Mammary epithelial cell (primary cell): ENCODE measurements at regions of chr13 and their contacts with region 1.

Region 1: DNA sequence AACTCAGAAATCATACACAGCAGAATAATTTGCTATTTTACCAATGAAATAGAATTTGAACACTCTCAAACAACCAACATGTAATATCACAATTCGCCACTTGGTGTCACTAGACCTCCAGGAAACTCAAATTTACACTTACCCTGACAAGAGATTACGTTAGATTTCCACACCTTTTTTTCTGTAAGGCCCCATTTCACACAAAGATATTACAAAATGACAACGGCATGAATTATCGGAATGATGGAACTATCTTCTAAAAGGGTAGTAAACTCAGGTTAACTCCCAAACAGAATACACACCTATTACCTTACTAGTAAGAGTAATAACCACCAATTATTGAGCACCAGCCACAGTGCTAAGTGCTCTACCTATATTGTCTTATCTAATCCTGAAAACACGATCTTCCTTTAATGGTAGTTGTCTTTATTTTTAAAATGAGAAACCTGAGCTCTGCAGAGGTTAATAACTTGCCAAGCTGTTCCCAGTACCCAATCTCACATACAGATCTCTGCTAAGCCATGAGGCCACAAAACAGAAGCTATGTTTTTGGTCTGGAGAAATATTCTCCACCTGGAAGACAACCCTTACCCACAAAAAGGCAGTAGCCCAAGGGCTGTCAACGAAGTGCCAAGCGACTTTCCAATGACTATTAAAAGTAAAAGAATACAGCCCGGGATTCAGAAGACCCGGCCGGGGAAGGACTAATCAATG is 152.4 kb downstream of the DCLK1 start:
- DNase-seq: peak; percentile 49
- H3K4me3 ChIP-seq: no peak overlapping the region
- H3K27ac ChIP-seq: peak overlapping the region; percentile 14
- H3K4me1 ChIP-seq: peaks cover 13% of the 10 kb centered on the region
- H3K27me3 ChIP-seq: no peaks in the 10 kb centered on the region
- CTCF ChIP-seq: peak; percentile 60 to 71

Region 2: GRCh38 chr13:35729926-35730627 is 248.7 kb before region 1 on chr13:
- CTCF ChIA-PET with region 1: no interaction called
- dilution Hi-C with region 1: no loop called
- in situ Hi-C with region 1: no loop called
- intact Hi-C with region 1: no loop called
- DNase-seq: no peak
- H3K4me3 ChIP-seq: no peak overlapping the region
- H3K27ac ChIP-seq: no peak overlapping the region
- H3K4me1 ChIP-seq: no peaks in the 10 kb centered on the region
- H3K27me3 ChIP-seq: no peaks in the 10 kb centered on the region
- CTCF ChIP-seq: no peak

Region 3: DNA sequence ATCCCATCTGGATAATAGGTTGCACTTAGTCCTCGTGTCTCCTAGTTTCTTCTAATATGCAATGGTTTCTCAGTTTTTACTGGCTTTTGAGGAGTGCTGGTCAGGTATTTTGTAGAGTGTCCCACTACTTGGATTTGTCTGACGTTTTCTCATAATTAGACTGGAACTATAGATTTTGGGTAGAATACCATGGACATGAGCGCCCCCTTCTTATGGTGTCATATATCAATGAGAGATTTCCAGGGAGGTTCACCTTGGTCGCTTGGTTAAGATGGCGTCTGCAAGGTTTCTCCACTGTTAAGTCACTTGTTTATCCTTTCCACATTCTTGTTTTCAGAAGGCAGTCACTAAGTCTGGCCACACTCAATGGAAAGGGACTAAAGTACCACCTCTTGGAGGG is 228.9 kb after region 1 on chr13:
- CTCF ChIA-PET with region 1: no interaction called
- dilution Hi-C with region 1: no loop called
- in situ Hi-C with region 1: no loop called
- intact Hi-C with region 1: loop called (anchors 1 kb)
- DNase-seq: no peak
- H3K4me3 ChIP-seq: no peak overlapping the region
- H3K27ac ChIP-seq: no peak overlapping the region
- H3K4me1 ChIP-seq: no peaks in the 10 kb centered on the region
- H3K27me3 ChIP-seq: peaks cover 2% of the 10 kb centered on the region
- CTCF ChIP-seq: peak in 1 of 2 donors; percentile 35

Region 4: GRCh38 chr13:36261976-36262375 is 283.2 kb after region 1 on chr13:
- CTCF ChIA-PET with region 1: no interaction called
- dilution Hi-C with region 1: loop called (anchors 25 kb)
- in situ Hi-C with region 1: loop called in 1 of 2 experiments (anchors 5 kb)
- intact Hi-C with region 1: no loop called
- DNase-seq: no peak
- H3K4me3 ChIP-seq: no peak overlapping the region
- H3K27ac ChIP-seq: no peak overlapping the region
- H3K4me1 ChIP-seq: no peaks in the 10 kb centered on the region
- H3K27me3 ChIP-seq: no peaks in the 10 kb centered on the region
- CTCF ChIP-seq: no peak

Region 5: DNA sequence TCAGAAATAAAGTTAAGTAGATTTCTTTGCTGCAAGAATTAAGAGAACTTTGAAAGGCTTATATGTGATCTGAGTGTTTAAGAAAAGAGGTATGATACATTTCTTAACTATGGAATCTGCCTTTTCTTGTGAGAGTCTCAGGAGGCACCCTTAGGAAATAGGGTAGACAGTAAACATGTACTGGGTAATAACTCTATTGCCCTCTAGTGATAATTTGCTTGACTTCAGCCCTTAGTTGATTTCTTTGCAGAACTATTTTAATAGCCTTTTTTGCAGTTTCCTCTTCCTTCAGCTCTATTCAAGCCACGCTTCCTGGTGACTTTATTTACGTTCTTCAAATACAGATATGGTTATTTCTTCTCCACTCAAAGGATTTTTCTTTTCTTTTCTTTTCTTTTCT is 416.5 kb after region 1 on chr13:
- CTCF ChIA-PET with region 1: no interaction called
- dilution Hi-C with region 1: no loop called
- in situ Hi-C with region 1: no loop called
- intact Hi-C with region 1: loop called (anchors 2 kb)
- DNase-seq: peak; percentile 20
- H3K4me3 ChIP-seq: no peak overlapping the region
- H3K27ac ChIP-seq: no peak overlapping the region
- H3K4me1 ChIP-seq: no peaks in the 10 kb centered on the region
- H3K27me3 ChIP-seq: no peaks in the 10 kb centered on the region
- CTCF ChIP-seq: peak; percentile 40 to 54

Region 6: DNA sequence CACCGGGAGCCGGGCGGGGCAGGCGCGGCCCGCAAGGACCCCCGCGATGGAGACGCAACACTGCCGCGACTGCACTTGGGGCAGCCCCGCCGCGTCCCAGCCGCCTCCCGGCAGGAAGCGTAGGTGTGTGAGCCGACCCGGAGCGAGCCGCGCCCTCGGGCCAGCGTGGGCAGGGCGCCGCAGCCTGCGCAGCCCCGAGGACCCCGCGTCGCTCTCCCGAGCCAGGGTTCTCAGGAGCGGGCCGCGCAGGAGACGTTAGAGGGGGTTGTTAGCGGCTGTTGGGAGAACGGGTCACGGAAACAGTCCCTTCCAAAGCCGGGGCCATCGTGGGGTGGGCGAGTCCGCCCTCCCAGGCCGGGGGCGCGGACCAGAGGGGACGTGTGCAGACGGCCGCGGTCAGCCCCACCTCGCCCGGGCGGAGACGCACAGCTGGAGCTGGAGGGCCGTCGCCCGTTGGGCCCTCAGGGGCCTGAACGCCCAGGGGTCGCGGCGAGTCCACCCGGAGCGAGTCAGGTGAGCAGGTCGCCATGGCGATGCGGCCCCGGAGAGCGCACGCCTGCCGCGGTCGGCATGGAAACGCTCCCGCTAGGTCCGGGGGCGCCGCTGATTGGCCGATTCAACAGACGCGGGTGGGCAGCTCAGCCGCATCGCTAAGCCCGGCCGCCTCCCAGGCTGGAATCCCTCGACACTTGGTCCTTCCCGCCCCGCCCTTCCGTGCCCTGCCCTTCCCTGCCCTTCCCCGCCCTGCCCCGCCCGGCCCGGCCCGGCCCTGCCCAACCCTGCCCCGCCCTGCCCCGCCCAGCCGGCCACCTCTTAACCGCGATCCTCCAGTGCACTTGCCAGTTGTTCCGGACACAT is 453.1 kb after region 1 on chr13 and contains the start of gene CCNA1:
- CTCF ChIA-PET with region 1: no interaction called
- dilution Hi-C with region 1: no loop called
- in situ Hi-C with region 1: loop called in 1 of 2 experiments (anchors 25 kb)
- intact Hi-C with region 1: no loop called
- DNase-seq: peak; percentile 47
- H3K4me3 ChIP-seq: peak within 1 kb of the TSS; percentile 60 to 71 (median 68)
- H3K27ac ChIP-seq: peak within 1 kb of the TSS; percentile 64
- H3K4me1 ChIP-seq: peaks cover 18% of the 10 kb centered on the region
- H3K27me3 ChIP-seq: no peaks in the 10 kb centered on the region
- CTCF ChIP-seq: no peak
- total RNA-seq, gene CCNA1: 15.9 to 19.3 TPM